Activated CD4-positive, alpha-beta T cell treated with anti-CD3 and anti-CD28 coated beads, Interleukin-2, amount 10 ng/mL, durations not matched to agents 24 days and 14 days (primary cell): ENCODE measurements at regions of chr17 and their contacts with region 1.

Region 1: GRCh38 chr17:67003231-67003630 is 38.7 kb downstream of the CACNG4 start:
- DNase-seq: no peak
- H3K4me3 Mint-ChIP-seq: no peak overlapping the region
- H3K27ac Mint-ChIP-seq: no peak overlapping the region
- H3K4me1 Mint-ChIP-seq: no peaks in the 10 kb centered on the region
- H3K27me3 Mint-ChIP-seq: peaks cover 10% of the 10 kb centered on the region

Region 2: DNA sequence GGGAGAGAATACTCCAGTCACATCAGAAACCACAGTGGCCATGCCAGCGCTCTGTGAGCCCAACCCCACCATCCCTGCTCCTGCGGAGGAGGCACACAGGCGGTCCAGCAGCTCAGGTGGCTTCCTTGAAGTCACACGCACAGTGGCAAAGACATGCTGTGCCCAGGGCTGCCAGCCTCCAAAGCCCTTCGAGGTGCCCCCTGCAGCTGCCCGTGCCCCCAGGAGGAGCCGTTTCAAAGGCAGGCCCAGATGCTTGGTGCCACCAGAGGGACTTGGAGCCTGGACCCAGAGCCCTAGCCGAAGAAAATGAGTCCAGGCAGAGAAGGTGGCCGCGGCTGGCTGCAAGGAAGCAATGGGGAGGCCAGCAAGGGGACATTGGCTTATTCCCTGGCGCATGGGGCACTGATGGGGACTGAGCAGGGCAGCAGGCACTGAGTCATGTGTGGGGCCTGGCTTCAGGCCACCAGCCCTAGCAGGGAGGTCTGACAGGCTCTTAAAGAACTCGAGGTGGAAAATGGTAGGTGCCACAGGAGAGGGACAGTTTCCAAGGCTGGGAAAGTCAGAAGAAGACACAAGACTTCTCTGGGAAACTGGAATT is 23.9 kb after region 1 on chr17:
- intact Hi-C with region 1: no loop called
- DNase-seq: no peak
- H3K4me3 Mint-ChIP-seq: no peak overlapping the region
- H3K27ac Mint-ChIP-seq: no peak overlapping the region
- H3K4me1 Mint-ChIP-seq: no peaks in the 10 kb centered on the region
- H3K27me3 Mint-ChIP-seq: no peaks in the 10 kb centered on the region

Region 3: DNA sequence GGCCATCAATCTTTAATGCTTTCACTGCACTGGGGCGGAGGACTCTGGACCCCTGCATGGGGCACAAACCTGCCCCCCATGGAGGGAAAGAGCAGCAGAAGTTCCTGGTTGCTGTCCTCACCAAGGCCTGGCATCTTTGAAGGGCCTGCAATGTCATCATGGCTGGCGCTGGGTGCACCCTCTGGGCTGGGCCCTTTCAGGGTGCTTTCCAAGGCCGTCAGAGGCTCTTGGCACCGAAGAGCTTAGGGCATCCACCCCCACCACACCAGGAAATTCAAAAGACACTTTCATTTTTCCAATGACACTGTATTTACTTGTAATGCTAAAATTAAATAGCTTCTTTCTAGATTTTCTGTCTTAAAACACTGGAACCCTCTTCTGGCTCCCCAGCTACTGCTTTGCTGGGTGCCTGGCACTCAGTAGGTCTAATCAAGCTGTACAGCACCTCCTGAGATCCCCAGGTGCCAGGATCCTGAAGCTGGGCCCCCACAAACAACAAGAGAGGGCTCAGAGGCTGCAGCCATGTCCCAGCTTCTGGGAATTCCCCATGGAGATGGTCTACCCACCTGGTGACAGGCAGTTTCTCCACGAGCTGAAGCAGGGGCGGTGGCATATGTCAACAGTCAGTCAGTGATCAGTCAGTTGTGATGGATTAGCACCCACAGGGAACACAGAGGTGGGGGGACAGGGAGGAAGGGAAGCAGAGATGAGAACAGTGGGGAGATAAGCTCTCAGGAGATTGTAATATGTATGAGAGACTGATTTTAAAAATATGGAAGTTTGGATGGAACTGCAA is 39.1 kb after region 1 on chr17:
- intact Hi-C with region 1: no loop called
- DNase-seq: no peak
- H3K4me3 Mint-ChIP-seq: no peak overlapping the region
- H3K27ac Mint-ChIP-seq: no peak overlapping the region
- H3K4me1 Mint-ChIP-seq: no peaks in the 10 kb centered on the region
- H3K27me3 Mint-ChIP-seq: peaks cover 8% of the 10 kb centered on the region

Region 4: DNA sequence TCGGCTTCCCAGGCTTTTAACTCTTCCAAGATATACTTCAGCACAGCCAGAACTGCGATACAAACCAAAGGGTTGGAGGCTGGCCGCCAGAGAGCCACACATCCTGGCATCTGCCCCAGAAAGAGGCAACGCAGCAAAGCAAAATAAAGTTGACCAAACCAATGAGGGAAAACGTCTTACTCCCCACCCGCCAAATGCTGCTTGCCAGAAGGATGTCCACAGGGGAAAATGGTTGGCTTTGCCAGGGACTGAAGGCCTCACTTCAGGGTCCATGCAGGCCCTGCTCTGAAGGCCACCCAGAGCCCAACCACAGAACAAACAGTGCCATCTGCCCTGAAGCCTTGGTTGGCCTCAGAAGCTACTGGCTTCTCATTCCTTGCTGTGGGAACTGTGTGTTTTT is 56.1 kb after region 1 on chr17:
- intact Hi-C with region 1: loop called (anchors 2 kb)
- DNase-seq: no peak
- H3K4me3 Mint-ChIP-seq: no peak overlapping the region
- H3K27ac Mint-ChIP-seq: no peak overlapping the region
- H3K4me1 Mint-ChIP-seq: no peaks in the 10 kb centered on the region
- H3K27me3 Mint-ChIP-seq: no peaks in the 10 kb centered on the region

Region 5: DNA sequence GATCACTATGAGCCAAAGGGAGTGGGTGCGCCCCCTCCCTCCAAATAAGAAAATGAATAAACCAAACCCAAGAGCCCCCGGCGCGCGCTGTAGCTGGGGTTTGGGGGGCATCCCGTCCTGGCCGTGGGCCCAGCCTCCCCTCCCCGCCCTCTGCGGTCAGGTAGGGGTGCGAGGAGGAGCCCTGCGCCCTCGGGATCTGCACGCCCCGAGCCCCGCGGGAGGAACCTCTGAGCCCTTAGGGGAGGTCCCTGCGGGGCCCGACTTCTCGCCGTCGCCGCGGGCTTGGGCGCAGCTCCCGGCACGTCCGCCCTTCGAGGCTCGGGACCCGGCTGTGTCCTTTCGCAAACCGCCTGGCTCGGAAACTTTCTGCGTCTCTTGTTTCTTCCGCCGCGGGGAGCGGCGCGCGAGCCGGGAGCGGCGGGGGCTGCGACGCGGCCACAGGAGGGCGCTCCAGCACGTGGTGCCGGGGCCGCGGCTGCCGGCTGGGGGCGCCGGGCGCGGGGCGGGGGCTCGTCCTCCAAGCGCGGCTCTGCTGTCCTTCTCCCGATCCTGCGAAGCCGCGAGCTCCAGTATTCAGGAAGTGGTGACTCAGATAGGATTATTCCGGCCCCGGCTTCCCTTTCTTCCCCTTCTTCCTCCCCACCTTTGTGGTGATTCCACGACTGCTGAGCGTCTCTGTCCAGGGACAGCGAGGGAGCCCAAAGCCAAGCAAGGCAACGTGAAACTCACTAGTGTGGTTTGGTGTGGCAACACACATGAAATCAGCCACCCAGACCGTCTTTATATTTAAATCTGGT is 375.4 kb after region 1 on chr17:
- intact Hi-C with region 1: no loop called
- DNase-seq: peak; percentile 95
- H3K4me3 Mint-ChIP-seq: peak overlapping the region; percentile 92
- H3K27ac Mint-ChIP-seq: peak overlapping the region; percentile 96
- H3K4me1 Mint-ChIP-seq: peaks cover 27% of the 10 kb centered on the region
- H3K27me3 Mint-ChIP-seq: no peaks in the 10 kb centered on the region